ENCODE measurements at regions of chr2 and their contacts with region 1.

Region 1: GRCh38 chr2:119517433-119517832 is 6.8 kb downstream of the SCTR start:
- DNase-seq: peak in 1 of 2 experiments; percentile 83
- H3K4me3 ChIP-seq: no peak overlapping the region
- H3K27ac ChIP-seq: no peak overlapping the region
- H3K4me1 ChIP-seq: no peaks in the 10 kb centered on the region
- H3K27me3 ChIP-seq: peaks cover 0 to 6% (median 4%) of the 10 kb centered on the region in 4 experiments; a peak in 6 of 7 replicates
- CTCF ChIP-seq: peak; percentile 84 to 97 (median 94)
- EP300 ChIP-seq: no peak
- POLR2A ChIP-seq: no peak
- RAD21 ChIP-seq: peak; percentile 70 to 76

Region 2: GRCh38 chr2:119487434-119488244 is 29.8 kb before region 1 on chr2:
- CTCF ChIA-PET with region 1: interaction called, 16 read pairs
- POLR2A ChIA-PET with region 1: no interaction called
- DNase-seq: no peak
- H3K4me3 ChIP-seq: no peak overlapping the region
- H3K27ac ChIP-seq: no peak overlapping the region
- H3K4me1 ChIP-seq: peaks cover 0 to 3% (median 2%) of the 10 kb centered on the region in 4 experiments; a peak in 6 of 7 replicates
- H3K27me3 ChIP-seq: no peaks in the 10 kb centered on the region; a peak in 1 of 7 replicates
- CTCF ChIP-seq: no peak
- EP300 ChIP-seq: no peak
- POLR2A ChIP-seq: no peak
- RAD21 ChIP-seq: no peak

Region 3: GRCh38 chr2:119494163-119494790 is 23.2 kb before region 1 on chr2:
- CTCF ChIA-PET with region 1: interaction called, 29 read pairs
- POLR2A ChIA-PET with region 1: no interaction called
- DNase-seq: no peak
- H3K4me3 ChIP-seq: no peak overlapping the region
- H3K27ac ChIP-seq: no peak overlapping the region
- H3K4me1 ChIP-seq: peaks cover 0 to 2% (median 0%) of the 10 kb centered on the region in 4 experiments; a peak in 2 of 7 replicates
- H3K27me3 ChIP-seq: no peaks in the 10 kb centered on the region
- CTCF ChIP-seq: peak in 1 of 3 experiments; percentile 31; a peak in 1 of 4 replicates
- EP300 ChIP-seq: no peak
- POLR2A ChIP-seq: no peak
- RAD21 ChIP-seq: peak; percentile 31 to 36

Region 4: GRCh38 chr2:119531292-119531691 is 13.9 kb after region 1 on chr2:
- CTCF ChIA-PET with region 1: interaction called, 52 read pairs
- POLR2A ChIA-PET with region 1: no interaction called
- DNase-seq: no peak
- H3K4me3 ChIP-seq: no peak overlapping the region
- H3K27ac ChIP-seq: no peak overlapping the region
- H3K4me1 ChIP-seq: peaks cover 0 to 7% (median 5%) of the 10 kb centered on the region in 4 experiments; a peak in 3 of 7 replicates
- H3K27me3 ChIP-seq: no peaks in the 10 kb centered on the region
- CTCF ChIP-seq: peak in 2 of 3 experiments; percentile 51 to 56; a peak in 2 of 4 replicates
- EP300 ChIP-seq: no peak
- POLR2A ChIP-seq: no peak
- RAD21 ChIP-seq: peak; percentile 65 to 67

Region 5: DNA sequence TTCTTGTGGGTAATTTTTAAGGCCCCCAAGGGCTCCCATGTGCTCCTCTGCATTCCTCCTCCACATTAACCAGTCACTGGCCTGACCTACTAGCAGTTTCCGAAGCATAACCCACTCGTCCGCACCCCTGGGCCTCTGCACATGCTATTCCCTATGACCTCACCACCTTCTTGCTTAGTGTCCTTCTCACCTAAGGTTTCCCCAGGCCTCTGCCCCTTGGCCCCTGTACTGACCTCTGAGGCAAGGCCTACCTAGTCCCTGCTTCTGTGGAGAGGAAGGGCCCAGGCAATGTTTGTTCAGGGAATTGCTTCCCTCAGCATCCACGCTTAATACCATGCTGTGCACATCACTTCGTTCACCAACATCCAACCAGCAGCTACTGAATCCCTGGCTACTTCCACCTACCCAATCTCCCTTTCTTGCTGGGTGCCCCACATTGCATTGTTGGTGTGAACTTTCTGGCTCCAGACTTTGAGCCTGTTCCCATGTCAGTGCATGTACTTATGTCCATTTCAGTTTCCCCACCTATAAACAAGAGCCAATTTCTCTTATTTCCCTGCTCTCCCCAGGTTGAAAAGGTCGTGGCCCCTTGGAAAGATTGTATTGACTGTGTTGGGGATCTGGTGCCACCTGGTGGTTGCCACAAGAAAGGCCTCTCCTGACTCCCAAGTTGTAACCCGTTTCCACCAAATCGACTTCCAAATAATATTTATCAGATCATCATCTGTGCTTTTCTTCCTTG is 142.3 kb after region 1 on chr2:
- CTCF ChIA-PET with region 1: interaction called, 10 read pairs
- POLR2A ChIA-PET with region 1: no interaction called
- DNase-seq: peak in 1 of 2 experiments; percentile 80
- H3K4me3 ChIP-seq: no peak overlapping the region
- H3K27ac ChIP-seq: no peak overlapping the region
- H3K4me1 ChIP-seq: no peaks in the 10 kb centered on the region
- H3K27me3 ChIP-seq: no peaks in the 10 kb centered on the region
- CTCF ChIP-seq: peak; percentile 77 to 85 (median 78)
- EP300 ChIP-seq: no peak
- POLR2A ChIP-seq: no peak
- RAD21 ChIP-seq: peak; percentile 83 to 86